ENCODE measurements at regions of chr14 and their contacts with region 1.

Region 1: DNA sequence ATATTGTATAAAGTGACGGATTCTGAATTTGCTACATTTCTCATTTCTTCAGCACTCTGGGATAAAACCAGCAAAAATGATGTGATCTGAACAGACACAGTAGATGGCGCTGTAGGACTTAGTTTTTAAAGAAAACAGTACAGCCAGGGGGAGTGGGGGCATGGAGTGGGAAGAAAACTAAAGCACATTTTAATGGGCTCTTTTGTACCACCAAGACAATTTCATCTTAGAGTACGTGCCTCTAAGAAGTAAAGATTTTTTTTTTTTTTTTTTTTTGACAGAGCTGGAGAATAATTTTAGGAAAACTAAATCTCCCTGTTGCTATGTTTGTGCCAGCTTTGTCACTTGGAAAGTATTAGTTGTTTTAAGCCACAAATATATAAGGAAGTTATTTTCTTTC is 124.4 kb downstream of the RAD51B start:
- DNase-seq: peak; percentile 77
- H3K4me3 Mint-ChIP-seq: no peak overlapping the region
- H3K27ac Mint-ChIP-seq: peak overlapping the region; percentile 81
- H3K4me1 Mint-ChIP-seq: peaks cover 39% of the 10 kb centered on the region
- H3K27me3 Mint-ChIP-seq: no peaks in the 10 kb centered on the region
- CTCF ChIP-seq: peak; percentile 81

Region 2: DNA sequence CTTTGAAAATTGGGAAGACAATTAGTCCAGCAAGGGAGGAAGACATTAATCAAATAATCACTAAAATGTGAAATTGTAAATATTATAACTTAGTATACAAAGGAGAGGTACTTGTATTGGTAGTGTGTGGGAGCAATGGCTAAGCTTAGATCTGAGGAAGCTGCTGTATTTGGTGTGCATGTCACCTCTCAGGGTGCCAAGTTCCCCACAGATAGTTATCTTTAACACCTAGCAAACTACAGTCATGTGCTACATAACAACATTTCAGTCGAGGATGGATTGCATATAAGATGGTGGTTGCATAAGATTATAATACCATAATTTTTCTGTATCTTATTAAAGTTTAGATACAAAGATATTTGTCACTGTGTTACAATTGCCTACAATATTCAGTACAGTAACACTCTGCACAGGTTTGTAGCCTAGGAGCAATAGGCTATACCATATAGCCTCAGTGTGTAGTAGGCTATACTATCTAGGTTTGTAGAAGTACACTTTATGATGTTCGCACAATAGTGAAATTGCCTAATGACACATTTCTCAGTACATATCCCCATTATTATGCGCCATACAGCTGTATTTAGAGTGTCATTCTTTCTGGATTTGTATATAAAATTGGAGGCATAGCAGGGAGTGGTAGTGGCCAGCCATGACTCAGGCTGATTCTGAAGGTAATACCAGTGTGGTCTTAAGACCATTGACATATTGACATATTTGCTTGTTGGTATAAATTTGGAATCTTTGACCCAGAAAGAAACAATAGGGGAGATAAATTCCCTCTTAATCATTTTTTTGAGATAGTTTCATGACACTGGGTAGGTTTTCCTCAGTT is 68.6 kb before region 1 on chr14:
- CTCF ChIA-PET with region 1: no interaction called
- POLR2A ChIA-PET with region 1: no interaction called
- intact Hi-C with region 1: no loop called
- DNase-seq: no peak
- H3K4me3 Mint-ChIP-seq: no peak overlapping the region
- H3K27ac Mint-ChIP-seq: no peak overlapping the region
- H3K4me1 Mint-ChIP-seq: no peaks in the 10 kb centered on the region
- H3K27me3 Mint-ChIP-seq: no peaks in the 10 kb centered on the region
- CTCF ChIP-seq: no peak

Region 3: GRCh38 chr14:67987606-67988005 is 43.7 kb after region 1 on chr14:
- CTCF ChIA-PET with region 1: no interaction called
- POLR2A ChIA-PET with region 1: no interaction called
- intact Hi-C with region 1: no loop called
- DNase-seq: no peak
- H3K4me3 Mint-ChIP-seq: no peak overlapping the region
- H3K27ac Mint-ChIP-seq: no peak overlapping the region
- H3K4me1 Mint-ChIP-seq: no peaks in the 10 kb centered on the region
- H3K27me3 Mint-ChIP-seq: no peaks in the 10 kb centered on the region
- CTCF ChIP-seq: no peak

Region 4: GRCh38 chr14:68084256-68084655 is 140.3 kb after region 1 on chr14:
- CTCF ChIA-PET with region 1: no interaction called
- POLR2A ChIA-PET with region 1: interaction called, 8 read pairs
- intact Hi-C with region 1: loop called (anchors 10 kb)
- DNase-seq: peak; percentile 8
- H3K4me3 Mint-ChIP-seq: no peak overlapping the region
- H3K27ac Mint-ChIP-seq: no peak overlapping the region
- H3K4me1 Mint-ChIP-seq: peaks cover 18% of the 10 kb centered on the region
- H3K27me3 Mint-ChIP-seq: no peaks in the 10 kb centered on the region
- CTCF ChIP-seq: peak; percentile 12

Region 5: DNA sequence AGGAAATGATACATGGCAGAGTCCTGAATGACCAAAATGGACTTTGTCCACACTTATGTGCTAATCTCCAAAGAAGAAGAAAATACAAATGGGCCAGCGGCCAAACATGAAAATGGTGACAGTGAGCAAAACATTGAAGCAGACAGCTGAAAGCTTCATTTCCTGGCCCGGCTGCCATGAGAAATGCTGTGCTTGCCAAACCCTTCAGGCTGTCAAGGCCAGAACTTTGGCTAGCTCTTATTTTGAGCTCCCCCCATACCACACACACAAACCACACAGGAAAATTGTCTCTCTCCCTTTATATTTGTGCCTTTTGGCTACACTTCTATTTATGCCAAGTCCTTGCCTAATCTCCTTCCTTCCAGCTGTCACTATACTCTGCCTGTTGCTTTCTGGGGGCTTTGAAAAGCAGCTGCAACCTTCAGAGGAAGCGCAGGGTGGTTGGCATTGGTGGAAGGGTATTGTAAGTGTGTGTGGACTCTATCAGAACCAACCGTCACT is 199.4 kb after region 1 on chr14:
- CTCF ChIA-PET with region 1: interaction called, 4 read pairs
- POLR2A ChIA-PET with region 1: interaction called, 10 read pairs
- intact Hi-C with region 1: loop called (anchors 2 kb)
- DNase-seq: peak; percentile 82
- H3K4me3 Mint-ChIP-seq: no peak overlapping the region
- H3K27ac Mint-ChIP-seq: peak overlapping the region; percentile 95
- H3K4me1 Mint-ChIP-seq: peaks cover 77% of the 10 kb centered on the region
- H3K27me3 Mint-ChIP-seq: no peaks in the 10 kb centered on the region
- CTCF ChIP-seq: no peak

Region 6: GRCh38 chr14:68232300-68233055 is 288.5 kb after region 1 on chr14:
- CTCF ChIA-PET with region 1: interaction called, 7 read pairs
- POLR2A ChIA-PET with region 1: interaction called, 6 read pairs
- intact Hi-C with region 1: loop called (anchors 5 kb)
- DNase-seq: peak; percentile 99
- H3K4me3 Mint-ChIP-seq: no peak overlapping the region
- H3K27ac Mint-ChIP-seq: no peak overlapping the region
- H3K4me1 Mint-ChIP-seq: no peaks in the 10 kb centered on the region
- H3K27me3 Mint-ChIP-seq: no peaks in the 10 kb centered on the region
- CTCF ChIP-seq: no peak

Region 7: DNA sequence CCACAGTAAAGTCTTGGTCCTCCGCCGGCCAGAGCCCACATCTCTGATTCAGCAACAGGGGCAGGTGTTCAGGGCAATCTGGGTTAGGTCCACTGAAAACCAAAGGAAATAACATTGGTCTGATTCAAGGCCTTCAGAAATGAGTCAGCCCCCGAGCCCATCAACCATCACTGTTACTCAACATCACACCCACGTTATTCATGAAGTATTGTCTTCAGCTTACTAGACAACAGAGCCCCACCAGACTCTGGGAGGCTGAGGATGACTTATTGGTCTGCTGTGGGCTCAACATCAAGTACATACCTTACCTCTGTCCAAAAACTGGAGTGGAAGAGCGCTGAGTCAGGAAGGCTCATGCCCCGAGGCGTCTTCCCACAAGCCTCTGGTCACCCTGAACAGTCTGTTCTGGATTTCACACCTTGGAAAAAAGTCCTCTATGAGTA is 751.4 kb after region 1 on chr14:
- CTCF ChIA-PET with region 1: interaction called, 3 read pairs
- POLR2A ChIA-PET with region 1: no interaction called
- intact Hi-C with region 1: loop called (anchors 5 kb)
- DNase-seq: peak; percentile 99
- H3K4me3 Mint-ChIP-seq: peak overlapping the region; percentile 40
- H3K27ac Mint-ChIP-seq: peak overlapping the region; percentile 96
- H3K4me1 Mint-ChIP-seq: peaks cover 44% of the 10 kb centered on the region
- H3K27me3 Mint-ChIP-seq: no peaks in the 10 kb centered on the region
- CTCF ChIP-seq: no peak

Measured in MCF 10A (cell line).